Posterior vena cava (tissue), 2 donors: ENCODE measurements at regions of chr1 and their contacts with region 1.

Region 1: GRCh38 chr1:65235867-65236805 is 73.2 kb upstream of the DNAJC6 start:
- DNase-seq: no peak

Region 2: DNA sequence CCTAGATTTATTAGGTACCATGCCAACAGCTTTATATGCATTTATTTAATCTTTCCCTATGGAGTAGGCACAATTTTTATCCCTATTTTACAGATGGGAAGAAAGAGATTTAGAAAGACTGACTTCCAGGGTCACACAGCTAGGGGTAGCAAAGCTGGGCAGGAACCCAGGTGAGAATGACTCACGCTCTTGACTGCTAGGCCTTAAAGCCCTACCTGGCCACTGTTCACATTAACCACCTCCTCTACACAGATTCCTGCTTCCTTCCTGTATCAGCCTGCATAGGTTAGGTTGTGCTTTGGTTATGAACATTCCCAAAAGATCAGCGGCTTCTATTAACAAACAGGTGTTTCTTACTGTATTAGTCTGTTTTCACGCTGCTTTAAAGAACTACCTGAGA is 126.4 kb after region 1 on chr1:
- intact Hi-C with region 1: loop called in 1 of 2 experiments (anchors 5 kb)
- DNase-seq: no peak

Region 3: GRCh38 chr1:65687428-65688214 is 451.5 kb after region 1 on chr1:
- intact Hi-C with region 1: loop called in 1 of 2 experiments (anchors 10 kb)
- DNase-seq: peak; percentile 93